Activated T-helper 1 cell treated with anti-CD3 and anti-CD28 coated beads, Interleukin-12 subunit alpha, Interleukin-12 subunit beta, Interleukin-2, Interleukin-4 antibody, amounts not matched to agents 30 ng/mL and 10 ng/mL and 1 ng/mL, durations not matched to agents 14 hours and 24 hours and 36 hours (primary cell): ENCODE measurements at regions of chrX and their contacts with region 1.

Region 1: DNA sequence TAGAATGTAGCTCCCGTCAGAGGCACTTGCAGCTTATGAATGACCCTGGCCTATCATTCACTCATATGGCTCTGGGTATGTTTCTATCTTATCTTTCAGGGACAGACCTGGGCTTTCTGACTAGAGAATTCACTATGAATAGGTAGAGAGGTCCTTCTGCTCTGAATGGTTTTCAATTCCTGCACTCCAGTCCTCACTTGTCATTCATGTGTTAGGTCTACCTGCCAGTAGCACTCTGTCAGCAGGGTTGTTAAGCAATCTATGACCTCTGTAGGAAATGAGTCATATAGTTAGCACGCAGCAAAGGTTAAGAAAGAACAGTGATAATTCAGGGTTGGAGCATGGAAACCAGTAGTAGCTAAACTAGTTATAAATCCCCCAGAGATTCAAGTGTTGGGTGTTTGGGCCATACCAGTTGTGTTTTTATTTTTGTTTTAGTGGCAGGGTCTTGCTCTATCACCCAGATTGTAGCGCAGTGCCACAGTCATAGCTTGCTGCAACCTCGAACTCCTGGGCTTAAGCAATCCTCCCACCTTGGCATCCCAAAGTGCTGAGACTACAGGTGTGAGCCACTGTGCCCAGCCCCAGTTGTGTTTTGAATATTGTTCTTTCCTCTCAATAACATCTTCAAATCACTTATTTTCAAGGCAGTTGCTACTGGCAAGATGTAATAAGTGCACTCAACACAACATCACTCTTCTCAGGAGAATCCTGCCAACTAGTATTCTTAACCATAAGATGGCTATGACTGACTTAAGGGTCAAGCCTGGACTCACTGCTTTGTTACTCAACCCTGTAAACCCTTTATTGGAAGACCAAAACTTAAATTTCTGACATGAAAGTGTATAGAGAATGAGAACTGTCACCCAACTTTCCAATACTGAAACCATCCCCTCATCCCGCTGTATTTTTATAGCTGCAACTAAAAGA is 25.1 kb downstream of the ARL13A start:
- DNase-seq: no peak
- H3K4me3 Mint-ChIP-seq: peak overlapping the region; percentile 30
- H3K27ac Mint-ChIP-seq: peak overlapping the region; percentile 82
- H3K4me1 Mint-ChIP-seq: peaks cover 30% of the 10 kb centered on the region
- H3K27me3 Mint-ChIP-seq: no peaks in the 10 kb centered on the region

Region 2: GRCh38 chrX:100609591-100609990 is 385.0 kb before region 1 on chrX:
- intact Hi-C with region 1: no loop called
- DNase-seq: no peak
- H3K4me3 Mint-ChIP-seq: no peak overlapping the region
- H3K27ac Mint-ChIP-seq: no peak overlapping the region
- H3K4me1 Mint-ChIP-seq: no peaks in the 10 kb centered on the region
- H3K27me3 Mint-ChIP-seq: no peaks in the 10 kb centered on the region

Region 3: GRCh38 chrX:100829730-100830129 is 164.9 kb before region 1 on chrX:
- intact Hi-C with region 1: loop called (anchors 2 kb)
- DNase-seq: no peak
- H3K4me3 Mint-ChIP-seq: peak overlapping the region; percentile 73
- H3K27ac Mint-ChIP-seq: peak overlapping the region; percentile 94
- H3K4me1 Mint-ChIP-seq: peaks cover 38% of the 10 kb centered on the region
- H3K27me3 Mint-ChIP-seq: no peaks in the 10 kb centered on the region

Region 4: GRCh38 chrX:100928660-100929613 is 65.7 kb before region 1 on chrX and contains the start of gene XKRX:
- intact Hi-C with region 1: loop called (anchors 1 kb)
- DNase-seq: peak; percentile 5
- H3K4me3 Mint-ChIP-seq: peak within 1 kb of the TSS; percentile 85
- H3K27ac Mint-ChIP-seq: peak within 1 kb of the TSS; percentile 34
- H3K4me1 Mint-ChIP-seq: peaks cover 22% of the 10 kb centered on the region
- H3K27me3 Mint-ChIP-seq: no peaks in the 10 kb centered on the region
- total RNA-seq, gene XKRX: 0.39 and 0.51 TPM in 2 replicates

Region 5: DNA sequence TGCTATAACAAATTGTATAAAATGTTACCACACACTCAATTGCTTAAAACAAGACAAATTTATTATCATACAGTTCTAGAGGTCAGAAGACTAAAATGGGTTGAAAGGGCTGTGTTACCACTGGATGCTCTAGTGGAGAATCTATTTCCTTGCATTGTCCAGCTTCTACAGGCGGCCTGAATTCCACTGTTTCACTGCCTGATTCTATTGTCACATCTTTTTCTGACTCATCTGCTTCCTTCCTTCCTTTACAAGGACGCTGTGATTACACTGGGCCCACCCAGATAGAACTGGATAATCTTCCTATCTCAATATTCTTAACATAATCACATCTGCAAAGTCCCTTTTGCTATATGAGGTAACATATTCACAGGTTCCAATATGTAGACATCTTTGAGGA is 536.3 kb after region 1 on chrX:
- intact Hi-C with region 1: no loop called
- DNase-seq: no peak
- H3K4me3 Mint-ChIP-seq: no peak overlapping the region
- H3K27ac Mint-ChIP-seq: no peak overlapping the region
- H3K4me1 Mint-ChIP-seq: no peaks in the 10 kb centered on the region
- H3K27me3 Mint-ChIP-seq: no peaks in the 10 kb centered on the region